Activated T-helper 1 cell treated with anti-CD3 and anti-CD28 coated beads, Interleukin-12 subunit alpha, Interleukin-12 subunit beta, Interleukin-2, Interleukin-4 antibody, amounts not matched to agents 30 ng/mL and 10 ng/mL and 1 ng/mL, durations not matched to agents 14 hours and 24 hours and 36 hours (primary cell): ENCODE measurements at regions of chr21 and their contacts with region 1.

Region 1: DNA sequence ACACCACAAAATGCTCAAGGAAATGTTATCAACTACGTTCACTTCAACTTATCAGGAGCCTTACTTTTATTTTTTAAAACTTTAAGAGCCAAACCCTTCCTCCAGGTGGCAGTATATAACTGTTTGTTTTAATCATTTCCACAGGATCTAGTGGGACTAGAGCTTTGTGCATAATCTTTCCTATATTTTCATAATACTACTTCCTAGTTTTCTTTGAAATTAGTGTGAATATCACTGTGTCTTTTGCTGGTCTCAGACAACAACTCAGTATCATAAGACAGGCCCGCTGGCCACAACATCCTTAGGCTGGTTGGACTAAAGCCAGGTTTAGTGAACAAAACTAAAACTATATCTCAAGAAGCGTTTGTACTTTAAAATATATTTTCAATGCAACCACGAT is 145.5 kb downstream of the TIAM1 start:
- DNase-seq: no peak
- H3K4me3 Mint-ChIP-seq: no peak overlapping the region
- H3K27ac Mint-ChIP-seq: no peak overlapping the region
- H3K4me1 Mint-ChIP-seq: peaks cover 46% of the 10 kb centered on the region
- H3K27me3 Mint-ChIP-seq: no peaks in the 10 kb centered on the region

Region 2: GRCh38 chr21:31098576-31099005 is 100.0 kb before region 1 on chr21:
- intact Hi-C with region 1: loop called (anchors 1 kb)
- DNase-seq: peak; percentile 57
- H3K4me3 Mint-ChIP-seq: no peak overlapping the region
- H3K27ac Mint-ChIP-seq: no peak overlapping the region
- H3K4me1 Mint-ChIP-seq: peaks cover 25% of the 10 kb centered on the region
- H3K27me3 Mint-ChIP-seq: peaks cover 17% of the 10 kb centered on the region

Region 3: DNA sequence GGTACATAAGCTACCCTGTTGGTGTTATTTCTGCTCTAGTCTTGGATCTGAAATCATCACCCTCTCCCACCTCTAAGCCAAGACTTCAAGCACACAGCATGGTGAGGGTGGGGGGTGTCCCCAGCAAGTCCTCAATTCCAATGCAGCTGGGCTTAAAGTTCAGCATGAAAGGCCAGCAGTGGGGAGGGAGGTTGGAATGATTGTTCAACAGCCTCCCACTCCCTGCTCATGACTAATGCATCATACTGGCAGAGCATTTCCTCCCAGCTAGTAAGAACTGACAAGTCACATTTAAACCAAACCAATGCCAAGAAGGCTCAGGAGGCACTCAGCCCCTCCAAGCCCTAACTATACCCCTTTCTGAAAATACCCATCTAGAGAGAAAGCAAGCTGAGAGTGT is 95.4 kb after region 1 on chr21:
- intact Hi-C with region 1: loop called (anchors 1 kb)
- DNase-seq: no peak
- H3K4me3 Mint-ChIP-seq: peak overlapping the region; percentile 56
- H3K27ac Mint-ChIP-seq: peak overlapping the region; percentile 86
- H3K4me1 Mint-ChIP-seq: peaks cover 35% of the 10 kb centered on the region
- H3K27me3 Mint-ChIP-seq: no peaks in the 10 kb centered on the region

Region 4: GRCh38 chr21:31335957-31336738 is 137.6 kb after region 1 on chr21:
- intact Hi-C with region 1: loop called (anchors 1 kb)
- DNase-seq: no peak
- H3K4me3 Mint-ChIP-seq: peak overlapping the region; percentile 17
- H3K27ac Mint-ChIP-seq: peak overlapping the region; percentile 67
- H3K4me1 Mint-ChIP-seq: peaks cover 78% of the 10 kb centered on the region
- H3K27me3 Mint-ChIP-seq: no peaks in the 10 kb centered on the region

Region 5: GRCh38 chr21:31426235-31426797 is 227.7 kb after region 1 on chr21:
- intact Hi-C with region 1: loop called (anchors 1 kb)
- DNase-seq: peak; percentile 2
- H3K4me3 Mint-ChIP-seq: peak overlapping the region; percentile 50
- H3K27ac Mint-ChIP-seq: peak overlapping the region; percentile 64
- H3K4me1 Mint-ChIP-seq: peaks cover 16% of the 10 kb centered on the region
- H3K27me3 Mint-ChIP-seq: peaks cover 10% of the 10 kb centered on the region

Region 6: GRCh38 chr21:31509194-31510017 is 310.8 kb after region 1 on chr21:
- intact Hi-C with region 1: loop called (anchors 1 kb)
- DNase-seq: peak; percentile 83
- H3K4me3 Mint-ChIP-seq: peak overlapping the region; percentile 45
- H3K27ac Mint-ChIP-seq: peak overlapping the region; percentile 73
- H3K4me1 Mint-ChIP-seq: peaks cover 51% of the 10 kb centered on the region
- H3K27me3 Mint-ChIP-seq: peaks cover 32% of the 10 kb centered on the region

Region 7: GRCh38 chr21:31604591-31605190 is 406.1 kb after region 1 on chr21:
- intact Hi-C with region 1: loop called (anchors 1 kb)
- DNase-seq: peak; percentile 39
- H3K4me3 Mint-ChIP-seq: no peak overlapping the region
- H3K27ac Mint-ChIP-seq: no peak overlapping the region
- H3K4me1 Mint-ChIP-seq: peaks cover 7% of the 10 kb centered on the region
- H3K27me3 Mint-ChIP-seq: peaks cover 11% of the 10 kb centered on the region

Region 8: GRCh38 chr21:32475164-32475812 is 1276.7 kb after region 1 on chr21:
- intact Hi-C with region 1: no loop called
- DNase-seq: no peak
- H3K4me3 Mint-ChIP-seq: no peak overlapping the region
- H3K27ac Mint-ChIP-seq: no peak overlapping the region
- H3K4me1 Mint-ChIP-seq: peaks cover 9% of the 10 kb centered on the region
- H3K27me3 Mint-ChIP-seq: no peaks in the 10 kb centered on the region